ENCODE measurements at regions of chr12 and their contacts with region 1.

Region 1: DNA sequence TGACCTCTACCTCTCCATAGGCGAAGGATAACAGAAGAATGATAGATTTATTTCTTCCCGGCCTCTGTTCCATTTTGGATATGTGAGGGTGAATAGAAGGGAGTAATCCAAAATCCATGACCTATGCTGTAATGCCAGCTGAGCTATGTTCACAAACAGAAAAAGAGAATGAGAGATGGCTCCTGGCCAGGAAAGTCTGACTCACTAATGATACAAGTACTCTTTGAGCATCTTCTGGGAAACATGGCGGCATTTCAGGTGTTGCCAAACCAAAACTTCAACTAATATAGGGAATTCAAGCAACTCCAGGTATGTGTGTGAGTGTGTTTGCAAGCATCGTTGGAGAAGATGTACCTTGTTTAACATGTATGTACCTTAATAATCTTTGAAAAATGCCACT is 55.1 kb downstream of the MED13L start:
- DNase-seq: peak in 2 of 3 donors; percentile 50 to 82
- ATAC-seq: peak; percentile 68 to 92 (median 77)
- H3K4me3 ChIP-seq: no peak overlapping the region
- H3K27ac ChIP-seq: no peak overlapping the region
- H3K4me1 ChIP-seq: no peaks in the 10 kb centered on the region
- H3K27me3 ChIP-seq: no peaks in the 10 kb centered on the region
- CTCF ChIP-seq: no peak
- POLR2A ChIP-seq: no peak

Region 2: GRCh38 chr12:116053479-116054200 is 168.7 kb before region 1 on chr12:
- intact Hi-C with region 1: no loop called
- DNase-seq: peak; percentile 33 to 87 (median 65)
- ATAC-seq: peak; percentile 92 to 99 (median 94)
- H3K4me3 ChIP-seq: no peak overlapping the region
- H3K27ac ChIP-seq: peak overlapping the region in 2 of 3 donors; percentile 49 to 50
- H3K4me1 ChIP-seq: peaks cover 0 to 30% (median 2%) of the 10 kb centered on the region in 4 donors
- H3K27me3 ChIP-seq: no peaks in the 10 kb centered on the region
- CTCF ChIP-seq: no peak
- POLR2A ChIP-seq: no peak

Region 3: GRCh38 chr12:116076399-116076798 is 146.0 kb before region 1 on chr12:
- intact Hi-C with region 1: no loop called
- DNase-seq: no peak
- ATAC-seq: no peak
- H3K4me3 ChIP-seq: no peak overlapping the region
- H3K27ac ChIP-seq: no peak overlapping the region
- H3K4me1 ChIP-seq: peaks cover 0 to 8% (median 2%) of the 10 kb centered on the region in 4 donors
- H3K27me3 ChIP-seq: no peaks in the 10 kb centered on the region
- CTCF ChIP-seq: no peak
- POLR2A ChIP-seq: no peak

Region 4: GRCh38 chr12:116142936-116143898 is 79.1 kb before region 1 on chr12:
- intact Hi-C with region 1: loop called in 1 of 2 experiments (anchors 10 kb)
- DNase-seq: no peak
- ATAC-seq: peak; percentile 45 to 70 (median 51)
- H3K4me3 ChIP-seq: no peak overlapping the region
- H3K27ac ChIP-seq: no peak overlapping the region
- H3K4me1 ChIP-seq: peaks cover 0 to 36% (median 9%) of the 10 kb centered on the region in 4 donors
- H3K27me3 ChIP-seq: no peaks in the 10 kb centered on the region
- CTCF ChIP-seq: no peak
- POLR2A ChIP-seq: no peak

Measured in right lobe of liver (tissue), 6 donors.